Dorsolateral prefrontal cortex (tissue), 120 donors: ENCODE measurements at regions of chr6 and their contacts with region 1.

Region 1: GRCh38 chr6:75243333-75244062 is at the start of gene COX7A2:
- DNase-seq: peak; percentile 91 to 98 (median 94)
- H3K4me3 ChIP-seq: peak within 1 kb of the TSS; percentile 45 to 99 (median 87)
- H3K27ac ChIP-seq: peak within 1 kb of the TSS; percentile 63 to 97 (median 90)
- H3K27me3 ChIP-seq: no peaks in the 10 kb centered on the region
- CTCF ChIP-seq: peak in 34 of 56 donors; percentile 11 to 59 (median 34)
- total RNA-seq, gene COX7A2: 186 to 540 (median 369) TPM

Region 2: DNA sequence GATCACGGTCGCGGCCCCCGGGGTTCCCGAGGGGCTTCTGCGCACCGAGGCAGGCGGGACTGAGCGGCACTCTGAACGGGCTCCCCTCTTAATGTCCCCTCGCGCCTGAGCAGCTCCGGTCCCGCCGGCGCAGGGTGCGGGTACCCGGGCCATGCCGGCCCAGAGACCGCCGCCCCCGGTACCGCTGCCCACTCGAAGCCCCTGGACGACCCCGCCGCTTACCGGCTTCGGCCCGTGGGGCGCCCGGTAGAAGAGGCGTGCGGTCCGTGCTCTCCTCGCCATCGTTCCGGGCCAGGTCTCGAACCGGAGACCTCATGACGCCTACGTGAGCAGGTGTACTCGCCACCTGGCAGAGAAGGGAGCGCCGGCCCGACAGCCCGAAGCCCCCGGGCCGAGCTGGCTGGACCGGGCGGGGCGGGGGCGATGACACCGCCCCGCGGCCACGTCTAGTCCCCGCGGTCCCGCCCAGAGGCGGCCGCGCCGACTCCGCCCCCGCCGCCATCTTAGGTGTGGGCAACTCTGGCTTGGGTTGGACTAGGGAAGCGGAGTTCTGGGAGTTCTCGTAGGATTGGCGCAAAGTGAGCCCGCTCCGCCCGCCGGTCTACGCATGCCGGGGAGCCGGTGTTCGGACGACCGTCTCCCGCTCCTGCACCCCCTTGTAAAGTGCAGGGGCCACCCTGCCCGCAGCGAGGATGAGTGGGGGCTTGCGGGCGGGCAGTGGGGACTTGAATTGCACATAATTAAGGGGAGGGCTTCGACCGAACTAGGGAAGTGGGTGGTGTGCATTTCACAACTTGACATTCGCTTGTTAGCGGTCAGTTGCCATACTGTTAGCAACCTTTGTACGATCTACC is 1589.7 kb before region 1 on chr6 and contains the start of gene SLC17A5:
- intact Hi-C with region 1: loop called in 1 of 2 experiments (anchors 10 kb)
- DNase-seq: peak; percentile 84 to 95 (median 93)
- H3K4me3 ChIP-seq: peak within 1 kb of the TSS; percentile 63 to 100 (median 97)
- H3K27ac ChIP-seq: peak within 1 kb of the TSS; percentile 74 to 99 (median 97)
- H3K27me3 ChIP-seq: no peaks in the 10 kb centered on the region
- CTCF ChIP-seq: peak in 32 of 56 donors; percentile 4 to 51 (median 29)
- total RNA-seq, gene SLC17A5: 10.8 to 27.7 (median 16.8) TPM

Region 3: DNA sequence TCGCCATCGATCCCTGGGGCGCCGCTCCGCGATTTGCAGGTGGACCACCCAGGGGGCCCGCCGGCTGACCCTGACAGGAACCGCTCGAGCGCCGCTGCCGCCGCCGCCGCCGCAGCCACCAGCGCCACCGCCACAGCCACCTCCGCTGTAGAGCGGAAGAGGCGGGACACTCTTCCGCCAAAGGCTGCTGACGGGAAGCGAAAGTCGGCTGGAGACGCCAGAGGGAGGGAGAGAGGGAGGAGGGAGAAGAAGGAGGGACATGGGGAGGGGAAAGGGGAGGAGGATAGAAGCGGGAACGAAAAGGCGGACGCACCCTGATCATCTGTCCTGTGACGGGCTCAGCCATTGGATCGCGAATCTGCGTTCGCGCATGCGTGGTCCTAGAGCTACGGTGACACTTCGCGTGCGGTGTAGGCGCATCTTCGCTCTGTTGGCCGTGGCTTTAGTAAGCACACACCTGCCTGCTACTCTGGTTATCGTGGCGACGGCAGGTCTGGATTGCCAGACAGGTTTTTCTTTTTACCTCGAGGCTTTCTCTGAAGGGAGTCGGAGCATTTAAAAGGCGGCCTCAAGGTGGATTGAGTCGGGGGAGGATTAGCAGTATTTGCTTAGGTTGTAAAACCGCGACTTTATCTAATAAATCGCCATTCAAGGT is 41.3 kb after region 1 on chr6 and contains the start of gene TMEM30A:
- intact Hi-C with region 1: loop called in 1 of 2 experiments (anchors 1 kb)
- DNase-seq: peak; percentile 94 to 99 (median 97)
- H3K4me3 ChIP-seq: peak within 1 kb of the TSS; percentile 63 to 99 (median 92)
- H3K27ac ChIP-seq: peak within 1 kb of the TSS; percentile 27 to 97 (median 90)
- H3K27me3 ChIP-seq: no peaks in the 10 kb centered on the region
- CTCF ChIP-seq: peak in 42 of 56 donors; percentile 10 to 64 (median 32)
- total RNA-seq, gene TMEM30A: 110 to 237 (median 190) TPM